ENCODE measurements at regions of chr3 and their contacts with region 1.

Region 1: GRCh38 chr3:59444294-59444671 is 394.5 kb upstream of the CFAP20DC start:
- DNase-seq: no peak
- ATAC-seq: peak; percentile 86
- H3K4me3 ChIP-seq: no peak overlapping the region
- H3K27ac ChIP-seq: peak overlapping the region; percentile 72
- H3K4me1 ChIP-seq: peaks cover 10% of the 10 kb centered on the region
- H3K27me3 ChIP-seq: no peaks in the 10 kb centered on the region
- CTCF ChIP-seq: no peak
- EP300 ChIP-seq: no peak
- POLR2A ChIP-seq: no peak
- RAD21 ChIP-seq: no peak

Region 2: DNA sequence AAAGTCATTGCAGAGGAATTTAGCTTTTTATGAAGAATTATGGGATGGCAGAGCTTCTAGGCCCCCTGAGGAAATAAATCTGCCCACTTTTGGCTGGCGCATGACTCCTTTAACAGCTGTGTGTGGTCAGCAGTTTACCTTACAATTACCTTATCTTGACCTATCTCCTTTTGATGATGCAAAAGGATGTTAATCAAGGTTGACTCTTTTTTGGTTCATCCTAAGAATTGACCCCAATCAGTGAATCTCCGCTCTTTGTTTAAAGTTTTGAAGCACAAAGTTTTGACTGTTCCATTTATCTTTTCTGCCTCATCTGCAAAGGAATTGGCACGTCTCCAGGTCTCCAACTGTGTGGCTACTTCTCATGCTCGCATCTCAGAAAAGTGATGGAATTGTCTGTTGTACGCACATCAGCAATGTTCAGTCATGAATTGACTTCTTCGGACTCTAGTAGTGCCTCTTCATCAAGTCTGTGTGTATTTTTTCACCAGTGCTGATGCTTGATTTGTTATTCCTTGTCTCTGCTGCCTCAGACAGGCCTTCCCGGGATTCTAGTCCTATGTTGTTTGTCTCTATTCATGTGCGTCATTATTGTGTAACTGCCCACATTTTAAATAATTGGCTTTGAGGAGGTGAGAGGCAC is 198.3 kb before region 1 on chr3:
- CTCF ChIA-PET with region 1: no interaction called
- POLR2A ChIA-PET with region 1: no interaction called
- RAD21 ChIA-PET with region 1: interaction called, 4 read pairs
- SMC1A ChIA-PET with region 1: interaction called, 35 read pairs
- in situ Hi-C with region 1: no loop called
- intact Hi-C with region 1: no loop called
- DNase-seq: no peak
- ATAC-seq: no peak
- H3K4me3 ChIP-seq: no peak overlapping the region
- H3K27ac ChIP-seq: peak overlapping the region; percentile 25; the same call in 1 of the 2 replicates
- H3K4me1 ChIP-seq: peaks cover 18% of the 10 kb centered on the region
- H3K27me3 ChIP-seq: no peaks in the 10 kb centered on the region
- CTCF ChIP-seq: no peak
- EP300 ChIP-seq: no peak
- POLR2A ChIP-seq: no peak
- RAD21 ChIP-seq: no peak

Region 3: DNA sequence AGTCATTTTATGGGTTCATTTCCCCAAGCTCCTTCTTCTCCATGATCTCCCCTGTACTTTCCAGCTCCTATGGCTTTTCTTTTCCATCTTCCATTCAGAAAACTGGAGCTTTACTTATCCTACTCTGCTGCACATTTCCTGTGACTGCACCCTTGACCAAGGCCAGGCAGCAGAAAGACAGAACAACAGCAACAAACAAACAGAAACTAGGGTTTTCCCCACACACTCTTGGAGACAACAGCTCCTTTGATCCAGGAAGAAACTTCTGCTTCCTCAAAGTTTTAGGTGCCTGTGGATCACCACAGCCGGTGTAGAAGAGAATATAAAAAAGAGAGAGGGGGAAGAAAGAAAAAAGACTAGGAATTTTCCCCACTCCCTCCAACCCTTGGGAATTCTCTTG is 52.2 kb before region 1 on chr3:
- CTCF ChIA-PET with region 1: no interaction called
- POLR2A ChIA-PET with region 1: interaction called, 12 read pairs
- RAD21 ChIA-PET with region 1: interaction called, 40 read pairs
- SMC1A ChIA-PET with region 1: interaction called, 33 read pairs
- in situ Hi-C with region 1: no loop called
- intact Hi-C with region 1: no loop called
- DNase-seq: no peak
- ATAC-seq: no peak
- H3K4me3 ChIP-seq: no peak overlapping the region
- H3K27ac ChIP-seq: no peak overlapping the region
- H3K4me1 ChIP-seq: peaks cover 19% of the 10 kb centered on the region
- H3K27me3 ChIP-seq: no peaks in the 10 kb centered on the region
- CTCF ChIP-seq: no peak
- EP300 ChIP-seq: no peak
- POLR2A ChIP-seq: no peak
- RAD21 ChIP-seq: no peak

Region 4: GRCh38 chr3:59424268-59425010 is 19.8 kb before region 1 on chr3:
- CTCF ChIA-PET with region 1: interaction called, 12 read pairs
- POLR2A ChIA-PET with region 1: no interaction called
- RAD21 ChIA-PET with region 1: interaction called, 4 read pairs
- SMC1A ChIA-PET with region 1: interaction called, 15 read pairs
- in situ Hi-C with region 1: no loop called
- intact Hi-C with region 1: no loop called
- DNase-seq: no peak
- ATAC-seq: peak; percentile 83
- H3K4me3 ChIP-seq: no peak overlapping the region
- H3K27ac ChIP-seq: no peak overlapping the region
- H3K4me1 ChIP-seq: peaks cover 24% of the 10 kb centered on the region
- H3K27me3 ChIP-seq: no peaks in the 10 kb centered on the region
- CTCF ChIP-seq: no peak
- EP300 ChIP-seq: no peak
- POLR2A ChIP-seq: no peak
- RAD21 ChIP-seq: no peak

Region 5: DNA sequence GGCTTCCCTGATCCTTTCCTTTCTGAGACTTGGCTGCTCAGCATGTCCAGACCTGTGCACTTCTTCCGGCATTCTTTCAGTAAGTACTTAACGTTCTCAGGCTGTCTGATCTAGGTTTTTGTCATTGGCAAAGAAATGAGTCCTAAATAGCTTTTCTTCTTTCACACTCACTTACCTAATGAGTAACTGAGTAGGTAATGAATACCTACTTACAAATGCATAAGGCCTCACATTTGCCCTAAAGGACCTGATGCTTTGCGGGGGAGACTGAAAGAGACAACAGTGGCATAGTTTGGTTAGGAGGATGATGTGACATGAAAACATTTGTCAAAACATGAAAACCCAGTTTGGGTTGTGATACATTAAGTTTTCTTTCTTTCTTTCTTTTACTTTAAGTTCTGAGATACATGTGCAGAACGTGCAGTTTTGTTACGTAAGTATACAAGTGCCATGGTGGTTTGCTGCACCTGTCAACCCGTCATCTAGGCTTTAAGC is 122.2 kb after region 1 on chr3:
- CTCF ChIA-PET with region 1: interaction called, 6 read pairs
- POLR2A ChIA-PET with region 1: interaction called, 3 read pairs
- RAD21 ChIA-PET with region 1: interaction called, 30 read pairs
- SMC1A ChIA-PET with region 1: interaction called, 44 read pairs
- in situ Hi-C with region 1: no loop called
- intact Hi-C with region 1: no loop called
- DNase-seq: peak; percentile 68
- ATAC-seq: peak; percentile 98
- H3K4me3 ChIP-seq: no peak overlapping the region
- H3K27ac ChIP-seq: peak overlapping the region; percentile 54
- H3K4me1 ChIP-seq: peaks cover 32% of the 10 kb centered on the region
- H3K27me3 ChIP-seq: no peaks in the 10 kb centered on the region
- CTCF ChIP-seq: no peak
- EP300 ChIP-seq: peak; percentile 87 to 93; a peak in 3 of 4 replicates
- POLR2A ChIP-seq: no peak
- RAD21 ChIP-seq: no peak

Measured in GM12878 (cell line).